Dendritic cell treated with granulocyte-macrophage colony-stimulating factor and Interleukin-4, amounts not matched to agents 40 ng/mL and 50 ng/mL, for 4 days (primary cell): ENCODE measurements at regions of chr1 and their contacts with region 1.

Region 1: DNA sequence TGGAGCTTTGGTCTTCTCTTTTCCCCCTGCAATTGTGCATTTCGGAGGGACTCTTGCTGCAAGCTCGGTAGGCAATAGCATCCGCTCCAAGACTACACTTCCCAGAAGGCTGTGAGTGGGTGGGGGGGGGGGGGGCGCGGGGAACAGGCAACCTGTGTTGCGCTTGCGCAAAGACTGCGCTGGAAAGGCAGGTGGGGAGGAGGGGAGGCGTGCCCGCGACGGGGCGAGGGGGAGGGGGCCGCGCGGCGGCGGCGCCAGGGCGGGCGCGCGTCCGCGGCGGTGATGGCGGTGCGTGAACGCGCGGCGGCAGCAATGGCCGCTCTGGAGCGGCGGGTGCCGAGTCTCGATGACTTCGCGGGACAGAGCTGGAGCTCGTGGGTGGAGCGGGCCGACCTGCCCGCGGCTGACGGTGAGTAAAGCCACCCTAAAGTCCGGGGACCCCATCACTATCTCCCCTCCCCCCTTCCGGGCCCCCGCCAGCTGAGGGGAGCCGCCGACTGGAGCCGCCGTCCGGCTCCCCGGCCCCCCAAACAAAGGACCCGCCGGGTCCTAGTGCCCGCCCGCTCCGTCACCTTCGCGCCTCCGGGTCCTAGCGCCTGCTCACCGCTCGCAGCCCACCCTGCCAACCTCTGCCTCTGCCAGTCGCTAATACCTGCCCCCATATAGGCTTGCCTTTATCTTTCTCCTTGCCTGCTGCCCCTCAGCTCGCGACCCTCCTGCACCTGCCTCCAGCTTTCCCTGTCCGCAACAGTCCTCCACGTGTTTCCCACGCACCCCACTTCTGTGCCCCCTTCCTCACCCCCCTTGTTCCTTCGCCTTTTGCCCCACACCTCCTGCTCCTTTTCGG is at the start of gene ATXN7L2:
- H3K4me3 Mint-ChIP-seq: peak within 1 kb of the TSS; percentile 82
- H3K27ac Mint-ChIP-seq: peak within 1 kb of the TSS; percentile 77
- H3K4me1 Mint-ChIP-seq: peaks cover 35% of the 10 kb centered on the region
- H3K27me3 Mint-ChIP-seq: peaks cover 44% of the 10 kb centered on the region

Region 2: DNA sequence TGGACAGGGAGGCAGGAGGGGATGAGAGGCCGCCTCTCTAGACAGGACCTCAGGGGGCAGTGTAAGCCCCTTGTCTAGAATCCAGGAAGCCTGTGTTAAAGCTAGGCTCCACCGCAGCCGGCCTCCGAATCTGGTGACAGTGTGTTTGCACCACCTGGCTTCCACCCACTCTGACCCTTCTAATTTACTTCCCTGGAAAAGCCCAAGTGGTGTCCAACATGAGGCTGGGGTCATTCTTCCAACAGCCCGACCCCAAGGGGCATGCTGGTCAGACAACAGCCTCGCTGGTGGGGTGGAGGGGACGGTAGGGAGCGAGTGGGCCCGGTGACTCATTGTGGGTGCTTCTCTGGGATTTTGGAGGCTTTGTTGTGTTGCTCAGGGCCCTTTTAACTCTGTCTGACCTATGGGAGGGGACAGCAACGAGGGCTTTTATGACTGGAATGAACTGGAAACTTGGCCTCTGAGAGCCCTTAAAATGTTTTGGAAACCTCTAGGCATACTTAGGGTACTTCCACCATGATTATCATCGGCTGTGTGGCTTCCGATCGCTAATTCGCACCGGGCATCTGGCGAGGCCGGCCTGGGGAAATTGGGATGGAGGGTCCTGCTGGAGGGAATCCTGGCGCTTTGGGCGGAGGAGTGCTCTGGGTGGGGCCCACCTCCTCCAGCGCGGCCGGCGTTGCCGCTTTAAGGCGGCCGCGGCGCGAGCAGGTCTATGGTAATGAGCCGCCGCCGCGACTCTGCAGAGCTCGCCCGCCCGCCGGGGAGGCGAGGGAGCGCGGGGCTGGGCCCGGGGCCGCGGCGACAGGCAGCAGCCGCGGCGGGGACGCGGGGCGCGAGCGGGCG is 234.9 kb before region 1 on chr1 and contains the start of gene CELSR2:
- intact Hi-C with region 1: loop called (anchors 5 kb)
- H3K4me3 Mint-ChIP-seq: peak within 1 kb of the TSS; percentile 57
- H3K27ac Mint-ChIP-seq: no peak within 1 kb of the TSS
- H3K4me1 Mint-ChIP-seq: peaks cover 5% of the 10 kb centered on the region
- H3K27me3 Mint-ChIP-seq: peaks cover 62% of the 10 kb centered on the region

Region 3: GRCh38 chr1:109426278-109427170 is 57.4 kb before region 1 on chr1 and contains the start of gene PSMA5:
- intact Hi-C with region 1: loop called (anchors 1 kb)
- H3K4me3 Mint-ChIP-seq: peak within 1 kb of the TSS; percentile 95
- H3K27ac Mint-ChIP-seq: peak within 1 kb of the TSS; percentile 95
- H3K4me1 Mint-ChIP-seq: peaks cover 37% of the 10 kb centered on the region
- H3K27me3 Mint-ChIP-seq: peaks cover 1% of the 10 kb centered on the region

Region 4: GRCh38 chr1:109454497-109455133 is 29.3 kb before region 1 on chr1:
- intact Hi-C with region 1: no loop called
- H3K4me3 Mint-ChIP-seq: no peak overlapping the region
- H3K27ac Mint-ChIP-seq: no peak overlapping the region
- H3K4me1 Mint-ChIP-seq: no peaks in the 10 kb centered on the region
- H3K27me3 Mint-ChIP-seq: peaks cover 38% of the 10 kb centered on the region